ENCODE measurements at regions of chr7 and their contacts with region 1.

Region 1: GRCh38 chr7:27921081-27921836 is 181.3 kb downstream of the TAX1BP1 start:
- DNase-seq: peak; percentile 30
- H3K4me3 Mint-ChIP-seq: no peak overlapping the region
- H3K27ac Mint-ChIP-seq: no peak overlapping the region
- H3K4me1 Mint-ChIP-seq: no peaks in the 10 kb centered on the region
- H3K27me3 Mint-ChIP-seq: no peaks in the 10 kb centered on the region

Region 2: GRCh38 chr7:27210441-27211083 is 710.7 kb before region 1 on chr7:
- CTCF ChIA-PET with region 1: interaction called, 33 read pairs
- DNase-seq: peak; percentile 57
- H3K4me3 Mint-ChIP-seq: peak overlapping the region; percentile 2
- H3K27ac Mint-ChIP-seq: peak overlapping the region; percentile 40
- H3K4me1 Mint-ChIP-seq: peaks cover 8% of the 10 kb centered on the region
- H3K27me3 Mint-ChIP-seq: peaks cover 99% of the 10 kb centered on the region

Region 3: DNA sequence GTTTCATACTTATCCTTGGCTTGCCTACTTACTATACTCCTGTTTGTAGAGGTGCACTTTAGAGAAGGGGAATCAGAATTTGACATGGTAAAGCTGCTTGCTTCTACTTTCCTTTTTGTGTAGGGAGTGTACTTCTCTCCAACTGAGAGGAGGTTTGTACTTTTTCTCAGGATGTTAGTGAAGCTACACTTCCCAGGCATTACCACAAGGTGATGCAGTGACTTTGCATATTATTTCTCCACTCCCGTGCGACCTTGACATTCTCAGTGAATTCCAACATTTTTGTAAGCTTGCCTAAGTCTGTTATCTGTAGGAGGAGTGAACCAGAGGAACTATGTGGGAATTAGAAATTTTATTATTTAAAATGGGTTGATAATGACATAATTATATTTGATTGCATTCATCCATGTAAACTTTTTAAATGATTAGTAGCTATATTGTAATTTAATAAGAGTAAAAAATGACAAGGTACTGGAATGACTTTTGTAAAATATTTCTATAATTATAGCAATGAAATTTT is 176.1 kb before region 1 on chr7:
- CTCF ChIA-PET with region 1: interaction called, 11 read pairs
- DNase-seq: no peak
- H3K4me3 Mint-ChIP-seq: no peak overlapping the region
- H3K27ac Mint-ChIP-seq: no peak overlapping the region
- H3K4me1 Mint-ChIP-seq: peaks cover 30% of the 10 kb centered on the region
- H3K27me3 Mint-ChIP-seq: no peaks in the 10 kb centered on the region

Region 4: DNA sequence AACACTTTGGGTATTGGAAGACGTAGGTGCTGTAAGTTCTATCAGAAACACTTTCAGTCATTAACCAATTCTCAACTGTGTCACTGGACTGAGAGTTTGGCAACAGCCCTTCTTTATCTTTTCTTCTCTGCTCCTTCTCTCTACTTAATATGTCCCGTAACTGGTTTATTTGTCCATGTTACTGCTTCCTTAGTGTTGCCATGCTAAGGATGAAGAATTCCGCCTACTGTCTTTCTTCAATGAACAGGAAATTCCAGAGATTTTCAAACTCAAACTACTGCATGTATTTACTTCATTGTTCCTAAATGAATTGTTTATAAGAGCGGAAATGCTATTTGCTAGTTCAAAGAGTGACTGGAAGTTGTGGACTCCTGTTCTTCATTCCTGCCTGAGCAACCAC is 37.6 kb before region 1 on chr7:
- CTCF ChIA-PET with region 1: no interaction called
- DNase-seq: no peak
- H3K4me3 Mint-ChIP-seq: no peak overlapping the region
- H3K27ac Mint-ChIP-seq: no peak overlapping the region
- H3K4me1 Mint-ChIP-seq: no peaks in the 10 kb centered on the region
- H3K27me3 Mint-ChIP-seq: peaks cover 3% of the 10 kb centered on the region

Region 5: DNA sequence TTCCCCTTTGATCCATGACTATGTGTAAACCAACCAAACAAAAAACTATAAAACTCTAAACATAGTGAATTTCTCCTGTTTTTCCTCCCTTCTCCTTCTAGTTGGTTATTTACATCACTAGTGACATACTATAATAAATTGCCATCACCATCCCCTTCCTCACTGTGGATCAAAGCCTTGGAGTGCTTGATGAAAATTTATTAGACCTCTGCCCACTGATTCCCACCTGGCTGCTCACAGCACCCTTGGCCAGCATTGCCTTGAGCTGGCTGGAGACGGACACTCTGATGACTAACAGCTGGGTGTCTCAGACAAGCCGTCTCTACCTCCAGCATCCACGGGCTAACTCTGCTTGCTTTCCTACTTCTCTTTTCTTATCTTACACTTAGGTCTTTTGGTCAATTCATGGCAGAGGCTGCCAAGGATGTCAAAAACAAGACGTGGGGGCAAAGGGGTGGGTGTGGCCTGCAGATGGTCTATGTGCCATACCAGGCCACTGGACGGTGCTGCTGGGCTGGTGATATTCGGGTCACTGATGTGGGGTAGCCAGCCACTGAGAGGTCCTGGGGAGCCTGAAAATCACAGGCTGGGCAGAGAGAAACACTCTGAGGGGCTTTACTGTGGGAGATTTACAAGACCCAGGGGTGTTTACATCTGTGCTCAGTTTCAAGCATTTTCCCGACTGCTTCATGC is 26.5 kb after region 1 on chr7:
- CTCF ChIA-PET with region 1: no interaction called
- DNase-seq: no peak
- H3K4me3 Mint-ChIP-seq: no peak overlapping the region
- H3K27ac Mint-ChIP-seq: no peak overlapping the region
- H3K4me1 Mint-ChIP-seq: peaks cover 9% of the 10 kb centered on the region
- H3K27me3 Mint-ChIP-seq: peaks cover 4% of the 10 kb centered on the region

Region 6: GRCh38 chr7:27994639-27995038 is 73.4 kb after region 1 on chr7:
- CTCF ChIA-PET with region 1: no interaction called
- DNase-seq: no peak
- H3K4me3 Mint-ChIP-seq: no peak overlapping the region
- H3K27ac Mint-ChIP-seq: no peak overlapping the region
- H3K4me1 Mint-ChIP-seq: peaks cover 2% of the 10 kb centered on the region
- H3K27me3 Mint-ChIP-seq: peaks cover 3% of the 10 kb centered on the region

Region 7: GRCh38 chr7:28020302-28020940 is 99.2 kb after region 1 on chr7:
- CTCF ChIA-PET with region 1: interaction called, 26 read pairs
- DNase-seq: peak; percentile 49
- H3K4me3 Mint-ChIP-seq: no peak overlapping the region
- H3K27ac Mint-ChIP-seq: no peak overlapping the region
- H3K4me1 Mint-ChIP-seq: peaks cover 3% of the 10 kb centered on the region
- H3K27me3 Mint-ChIP-seq: peaks cover 12% of the 10 kb centered on the region

Measured in activated naive CD4-positive, alpha-beta T cell treated with anti-CD3 and anti-CD28 coated beads, Interleukin-2, amount 10 ng/mL, durations not matched to agents 7 days and 5 days (primary cell).